ENCODE measurements at regions of chr1 and their contacts with region 1.

Region 1: GRCh38 chr1:64519901-64520300 is 50.0 kb downstream of the CACHD1 start:
- DNase-seq: peak in 1 of 6 donors; percentile 20
- ATAC-seq: peak in 2 of 4 donors; percentile 43 to 53
- H3K4me3 ChIP-seq: no peak overlapping the region
- H3K27ac ChIP-seq: no peak overlapping the region
- H3K4me1 ChIP-seq: peaks cover 17 to 35% (median 32%) of the 10 kb centered on the region in 3 donors
- H3K27me3 ChIP-seq: no peaks in the 10 kb centered on the region
- CTCF ChIP-seq: no peak

Region 2: GRCh38 chr1:64282354-64282753 is 237.5 kb before region 1 on chr1:
- intact Hi-C with region 1: no loop called
- DNase-seq: peak; percentile 9 to 72 (median 48)
- ATAC-seq: peak; percentile 51 to 69 (median 57)
- H3K4me3 ChIP-seq: no peak overlapping the region
- H3K27ac ChIP-seq: peak overlapping the region in 1 of 4 donors; percentile 12
- H3K4me1 ChIP-seq: no peaks in the 10 kb centered on the region
- H3K27me3 ChIP-seq: no peaks in the 10 kb centered on the region
- CTCF ChIP-seq: no peak

Region 3: GRCh38 chr1:64469977-64470664 is 49.8 kb before region 1 on chr1 and contains the start of gene CACHD1:
- intact Hi-C with region 1: loop called in 1 of 3 experiments (anchors 10 kb)
- DNase-seq: peak; percentile 80 to 91 (median 85)
- ATAC-seq: peak; percentile 81 to 89 (median 84)
- H3K4me3 ChIP-seq: peak within 1 kb of the TSS; percentile 37 to 80 (median 79)
- H3K27ac ChIP-seq: peak within 1 kb of the TSS; percentile 76 to 90 (median 79)
- H3K4me1 ChIP-seq: peaks cover 6 to 19% (median 10%) of the 10 kb centered on the region in 3 donors
- H3K27me3 ChIP-seq: no peaks in the 10 kb centered on the region
- CTCF ChIP-seq: peak in 1 of 4 donors; percentile 21
- total RNA-seq, gene CACHD1: 4.0 to 7.1 (median 5.5) TPM

Region 4: DNA sequence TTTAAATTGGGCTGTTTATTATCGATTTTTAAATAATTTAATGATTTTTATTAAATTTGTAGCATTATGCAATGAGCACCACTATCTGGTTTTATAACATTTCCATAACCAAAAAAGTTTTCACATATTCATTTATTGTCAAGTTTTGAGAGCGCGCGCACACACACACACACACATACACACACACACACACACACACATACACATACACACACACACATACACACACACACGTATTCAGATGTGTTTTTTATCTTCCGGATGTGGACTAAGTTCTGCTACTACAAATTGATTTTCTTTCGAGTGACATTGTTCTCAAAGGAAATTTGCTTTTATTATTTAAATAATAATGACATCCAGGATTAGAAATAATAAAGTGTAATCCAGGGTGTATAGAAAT is 33.7 kb before region 1 on chr1:
- intact Hi-C with region 1: no loop called
- DNase-seq: no peak
- ATAC-seq: no peak
- H3K4me3 ChIP-seq: no peak overlapping the region
- H3K27ac ChIP-seq: no peak overlapping the region
- H3K4me1 ChIP-seq: peaks cover 2 to 23% (median 11%) of the 10 kb centered on the region in 3 donors
- H3K27me3 ChIP-seq: no peaks in the 10 kb centered on the region
- CTCF ChIP-seq: no peak

Region 5: DNA sequence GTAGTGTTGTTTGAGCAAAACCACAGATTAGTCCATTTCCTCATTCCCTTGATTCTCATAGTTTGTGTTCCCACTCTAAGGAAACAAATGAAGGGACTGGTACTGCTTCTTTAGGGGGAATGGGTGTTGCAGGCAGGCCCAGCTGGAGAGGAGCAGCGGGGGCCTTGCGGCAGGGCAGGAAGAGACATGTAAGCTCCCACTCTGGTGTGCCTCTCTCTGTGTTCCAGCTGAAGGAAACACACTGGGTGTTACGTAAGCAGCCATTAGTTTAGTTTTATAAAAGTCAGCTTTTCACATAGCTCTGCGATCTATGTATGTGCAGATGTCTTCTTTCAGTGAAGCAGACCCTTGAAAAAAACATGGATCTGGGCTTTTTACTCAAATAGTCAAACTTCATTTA is 49.5 kb after region 1 on chr1:
- intact Hi-C with region 1: no loop called
- DNase-seq: no peak
- ATAC-seq: no peak
- H3K4me3 ChIP-seq: no peak overlapping the region
- H3K27ac ChIP-seq: no peak overlapping the region
- H3K4me1 ChIP-seq: peaks cover 0 to 3% (median 0%) of the 10 kb centered on the region in 3 donors
- H3K27me3 ChIP-seq: no peaks in the 10 kb centered on the region
- CTCF ChIP-seq: no peak

Measured in pancreas (tissue), 10 donors.